ENCODE measurements at regions of chr3 and their contacts with region 1.

Region 1: GRCh38 chr3:186783073-186783730 is at the start of gene EIF4A2:
- DNase-seq: peak; percentile 71 to 89
- ATAC-seq: peak; percentile 83 to 84
- H3K4me3 ChIP-seq: peak within 1 kb of the TSS; percentile 94
- H3K27ac ChIP-seq: peak within 1 kb of the TSS; percentile 96 to 100
- H3K4me1 ChIP-seq: peaks cover 27% of the 10 kb centered on the region
- CTCF ChIP-seq: no peak
- EP300 ChIP-seq: no peak
- POLR2A ChIP-seq: peak; percentile 96
- RAD21 ChIP-seq: 0 out of 5 replicates have a peak, but pooled peaks of 1 of the 2 experiments have one; percentile 5
- polyA plus RNA-seq, gene EIF4A2: 337 and 493 TPM in 2 replicates

Region 2: GRCh38 chr3:186570096-186570940 is 212.9 kb before region 1 on chr3 and contains the start of gene DNAJB11:
- CTCF ChIA-PET with region 1: no interaction called
- POLR2A ChIA-PET with region 1: interaction called, 24 read pairs
- DNase-seq: peak; percentile 97 to 99
- ATAC-seq: peak; percentile 94 to 95
- H3K4me3 ChIP-seq: peak within 1 kb of the TSS; percentile 85
- H3K27ac ChIP-seq: peak within 1 kb of the TSS; percentile 89 to 90
- H3K4me1 ChIP-seq: peaks cover 16% of the 10 kb centered on the region; the same call in 2 of the 3 replicates
- CTCF ChIP-seq: no peak
- EP300 ChIP-seq: no peak
- POLR2A ChIP-seq: peak; percentile 63
- RAD21 ChIP-seq: no peak
- polyA plus RNA-seq, gene DNAJB11: 36.0 and 61.9 TPM in 2 replicates

Region 3: DNA sequence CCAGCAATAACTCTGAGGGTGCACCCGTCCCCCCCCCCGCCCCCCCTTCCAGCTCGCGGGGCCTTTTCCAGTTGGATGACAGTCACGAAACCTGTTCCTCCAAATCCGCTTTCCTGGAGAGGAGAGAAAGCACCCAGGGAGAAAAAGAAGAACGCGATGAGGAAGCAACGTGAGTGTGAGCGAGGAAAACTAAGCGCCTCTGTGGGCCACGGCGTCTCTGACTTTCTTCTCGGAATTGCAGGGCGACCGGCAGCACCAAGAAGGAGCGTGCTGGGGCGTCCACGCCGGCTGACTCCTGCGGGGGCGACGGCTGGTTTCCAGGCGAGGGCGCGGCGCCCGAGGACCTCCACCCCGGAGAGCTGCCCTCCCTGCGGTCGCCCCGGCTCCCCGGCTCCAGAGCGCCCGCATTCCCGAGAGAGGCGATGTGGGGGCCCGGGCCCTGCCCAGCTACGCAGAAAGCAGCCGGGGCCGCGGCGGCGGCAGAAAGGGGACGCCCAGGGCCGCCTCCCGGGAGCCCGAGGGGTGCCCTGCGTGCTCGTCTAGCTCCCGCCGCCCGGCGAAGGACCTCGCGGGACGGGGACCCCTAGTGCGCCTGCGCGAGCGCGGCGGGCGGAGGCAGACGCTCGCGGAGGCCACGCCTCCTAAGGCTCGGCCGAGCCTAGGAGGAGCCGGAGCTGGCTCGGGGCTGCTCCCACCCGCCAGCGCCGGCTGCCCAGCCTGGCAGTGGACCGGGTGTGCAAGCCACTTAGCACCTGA is 44.0 kb after region 1 on chr3:
- CTCF ChIA-PET with region 1: interaction called, 3 read pairs
- POLR2A ChIA-PET with region 1: interaction called, 11 read pairs
- DNase-seq: peak; percentile 72 to 91
- ATAC-seq: peak; percentile 86 to 93
- H3K4me3 ChIP-seq: peak overlapping the region; percentile 70
- H3K27ac ChIP-seq: peak overlapping the region; percentile 86 to 99
- H3K4me1 ChIP-seq: peaks cover 10% of the 10 kb centered on the region; the same call in 1 of the 3 replicates
- CTCF ChIP-seq: no peak
- EP300 ChIP-seq: no peak
- POLR2A ChIP-seq: peak; percentile 74
- RAD21 ChIP-seq: no peak